Psoas muscle (tissue), 8 donors: ENCODE measurements at regions of chr7 and their contacts with region 1.

Region 1: GRCh38 chr7:25314731-25315267 is 86.5 kb upstream of the NPVF start:
- DNase-seq: no peak
- ATAC-seq: no peak
- H3K4me3 ChIP-seq: no peak overlapping the region
- H3K27ac ChIP-seq: no peak overlapping the region
- H3K4me1 ChIP-seq: no peaks in the 10 kb centered on the region
- H3K27me3 ChIP-seq: no peaks in the 10 kb centered on the region
- CTCF ChIP-seq: no peak

Region 2: DNA sequence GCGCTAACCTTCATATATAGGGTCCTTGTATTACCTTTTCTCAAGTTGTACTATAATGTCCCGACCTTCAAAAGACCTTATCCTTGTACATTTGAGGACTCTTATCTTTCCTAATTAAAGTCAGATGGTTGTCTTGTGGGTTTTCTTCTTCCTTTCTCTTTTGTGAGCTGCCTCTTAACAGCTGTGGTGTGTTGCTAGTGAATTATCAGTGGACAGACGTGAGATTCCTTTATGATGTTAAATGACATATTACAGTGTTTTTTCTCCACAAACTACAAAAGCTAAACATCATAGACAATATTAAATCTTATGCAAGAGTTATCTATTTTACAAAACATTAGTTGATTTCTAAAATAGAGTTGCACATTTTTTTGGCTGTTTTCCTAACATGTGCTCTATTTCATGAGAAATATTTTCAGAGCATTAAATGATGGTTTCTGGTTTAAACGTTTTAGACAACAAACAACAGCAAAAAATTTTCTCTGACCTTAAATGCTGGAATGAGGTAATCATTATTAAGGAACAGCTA is 185.7 kb after region 1 on chr7:
- intact Hi-C with region 1: loop called in 1 of 2 experiments (anchors 10 kb)
- DNase-seq: no peak
- ATAC-seq: no peak
- H3K4me3 ChIP-seq: no peak overlapping the region
- H3K27ac ChIP-seq: no peak overlapping the region
- H3K4me1 ChIP-seq: no peaks in the 10 kb centered on the region
- H3K27me3 ChIP-seq: no peaks in the 10 kb centered on the region
- CTCF ChIP-seq: no peak